Mammary epithelial cell (primary cell): ENCODE measurements at regions of chr11 and their contacts with region 1.

Region 1: GRCh38 chr11:61627567-61628445 is 46.9 kb upstream of the SYT7 start:
- DNase-seq: peak; percentile 59
- H3K4me3 ChIP-seq: no peak overlapping the region
- H3K27ac ChIP-seq: no peak overlapping the region
- H3K4me1 ChIP-seq: peaks cover 19% of the 10 kb centered on the region
- H3K27me3 ChIP-seq: no peaks in the 10 kb centered on the region
- CTCF ChIP-seq: peak; percentile 89 to 96

Region 2: GRCh38 chr11:61332797-61333549 is 294.8 kb before region 1 on chr11 and contains the starts of genes DDB1 and TKFC:
- CTCF ChIA-PET with region 1: no interaction called
- dilution Hi-C with region 1: no loop called
- in situ Hi-C with region 1: no loop called
- intact Hi-C with region 1: no loop called
- DNase-seq: peak; percentile 92
- H3K4me3 ChIP-seq: peak within 1 kb of the TSS; percentile 69 to 93 (median 91)
- H3K27ac ChIP-seq: peak within 1 kb of the TSS; percentile 84
- H3K4me1 ChIP-seq: peaks cover 39% of the 10 kb centered on the region
- H3K27me3 ChIP-seq: no peaks in the 10 kb centered on the region
- CTCF ChIP-seq: no peak
- total RNA-seq, gene DDB1: 214 to 230 TPM
- total RNA-seq, gene TKFC: 30.0 to 65.3 TPM

Region 3: GRCh38 chr11:61477727-61478148 is 150.1 kb before region 1 on chr11:
- CTCF ChIA-PET with region 1: no interaction called
- dilution Hi-C with region 1: no loop called
- in situ Hi-C with region 1: loop called in 1 of 2 experiments (anchors 10 kb)
- intact Hi-C with region 1: loop called (anchors 1 kb)
- DNase-seq: no peak
- H3K4me3 ChIP-seq: no peak overlapping the region
- H3K27ac ChIP-seq: no peak overlapping the region
- H3K4me1 ChIP-seq: peaks cover 8% of the 10 kb centered on the region
- H3K27me3 ChIP-seq: no peaks in the 10 kb centered on the region
- CTCF ChIP-seq: peak; percentile 73 to 95

Region 4: DNA sequence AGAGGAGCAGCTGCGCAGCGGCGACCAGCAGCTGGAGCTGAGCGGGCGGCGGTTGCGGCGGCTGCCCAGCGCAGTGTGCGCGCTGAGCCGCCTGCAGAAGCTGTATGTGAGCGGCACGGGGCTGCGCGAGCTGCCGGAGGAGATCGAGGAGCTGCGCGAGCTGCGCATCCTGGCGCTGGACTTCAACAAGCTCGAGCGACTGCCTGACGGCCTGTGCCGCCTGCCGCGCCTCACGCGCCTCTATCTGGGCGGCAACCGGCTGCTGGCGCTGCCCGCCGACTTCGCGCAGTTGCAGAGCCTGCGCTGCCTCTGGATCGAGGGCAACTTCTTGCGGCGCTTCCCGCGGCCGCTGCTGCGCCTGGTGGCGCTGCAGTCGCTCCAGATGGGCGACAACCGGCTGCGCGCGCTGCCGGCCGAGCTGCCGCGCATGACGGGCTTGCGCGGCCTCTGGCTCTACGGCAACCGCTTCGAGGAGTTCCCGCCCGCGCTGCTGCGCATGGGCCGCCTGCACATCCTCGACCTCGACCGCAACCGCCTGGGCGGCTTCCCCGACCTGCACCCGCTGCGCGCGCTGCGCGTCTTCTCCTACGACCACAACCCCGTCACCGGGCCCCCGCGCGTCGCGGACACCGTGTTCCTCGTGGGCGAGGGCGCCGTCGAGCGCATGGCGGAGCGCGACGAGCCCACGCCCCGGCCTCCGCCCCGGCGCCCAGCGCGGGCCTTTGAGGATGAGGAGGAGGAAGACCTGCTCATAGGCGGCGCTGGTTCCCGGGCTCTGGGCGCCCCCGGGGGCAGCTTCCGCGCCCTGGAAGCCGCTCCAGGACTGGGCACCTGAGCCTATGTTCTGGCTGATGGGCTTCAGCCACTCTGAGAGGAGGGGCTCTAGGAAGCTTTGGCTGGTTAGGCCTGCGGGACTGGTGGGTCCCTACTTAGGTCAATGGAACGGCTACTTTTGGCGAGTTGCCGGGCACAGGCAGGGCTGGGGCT is 118.5 kb before region 1 on chr11:
- CTCF ChIA-PET with region 1: no interaction called
- dilution Hi-C with region 1: no loop called
- in situ Hi-C with region 1: no loop called
- intact Hi-C with region 1: no loop called
- DNase-seq: peak; percentile 84
- H3K4me3 ChIP-seq: peak overlapping the region in 2 of 3 experiments; percentile 19 to 35
- H3K27ac ChIP-seq: no peak overlapping the region
- H3K4me1 ChIP-seq: peaks cover 11% of the 10 kb centered on the region
- H3K27me3 ChIP-seq: peaks cover 11% of the 10 kb centered on the region
- CTCF ChIP-seq: peak; percentile 24 to 52

Region 5: GRCh38 chr11:61567286-61568061 is 60.3 kb before region 1 on chr11:
- CTCF ChIA-PET with region 1: no interaction called
- dilution Hi-C with region 1: no loop called
- in situ Hi-C with region 1: no loop called
- intact Hi-C with region 1: loop called (anchors 1 kb)
- DNase-seq: peak; percentile 70
- H3K4me3 ChIP-seq: peak overlapping the region in 1 of 3 experiments; percentile 16
- H3K27ac ChIP-seq: no peak overlapping the region
- H3K4me1 ChIP-seq: no peaks in the 10 kb centered on the region
- H3K27me3 ChIP-seq: no peaks in the 10 kb centered on the region
- CTCF ChIP-seq: peak; percentile 42 to 62

Region 6: GRCh38 chr11:61602775-61603569 is 24.8 kb before region 1 on chr11:
- CTCF ChIA-PET with region 1: no interaction called
- dilution Hi-C with region 1: no loop called
- in situ Hi-C with region 1: no loop called
- intact Hi-C with region 1: loop called (anchors 2 kb)
- DNase-seq: peak; percentile 98
- H3K4me3 ChIP-seq: no peak overlapping the region
- H3K27ac ChIP-seq: peak overlapping the region; percentile 79
- H3K4me1 ChIP-seq: peaks cover 37% of the 10 kb centered on the region
- H3K27me3 ChIP-seq: no peaks in the 10 kb centered on the region
- CTCF ChIP-seq: no peak

Region 7: DNA sequence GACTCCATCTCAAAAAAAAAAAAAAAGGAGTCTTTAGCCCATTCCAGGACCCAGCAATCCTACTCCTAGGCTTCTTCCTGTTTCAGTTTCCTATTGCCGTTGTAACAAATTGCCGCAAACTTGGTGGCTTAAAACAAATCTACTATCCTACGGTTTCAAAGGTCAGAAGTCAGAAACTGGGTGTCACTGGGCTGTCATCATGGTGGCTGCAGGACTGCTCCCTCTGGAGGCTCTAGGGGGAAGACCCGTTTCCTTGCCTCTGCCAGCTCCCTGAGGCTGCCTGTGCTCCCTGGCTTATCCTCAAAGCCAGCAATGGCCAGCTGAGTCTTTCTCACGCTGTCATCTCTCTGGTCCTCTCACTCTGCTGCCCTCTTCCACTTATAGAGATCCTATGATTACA is 43.7 kb after region 1 on chr11:
- CTCF ChIA-PET with region 1: no interaction called
- dilution Hi-C with region 1: no loop called
- in situ Hi-C with region 1: no loop called
- intact Hi-C with region 1: no loop called
- DNase-seq: no peak
- H3K4me3 ChIP-seq: no peak overlapping the region
- H3K27ac ChIP-seq: no peak overlapping the region
- H3K4me1 ChIP-seq: no peaks in the 10 kb centered on the region
- H3K27me3 ChIP-seq: peaks cover 7% of the 10 kb centered on the region
- CTCF ChIP-seq: peak; percentile 15 to 43

Region 8: DNA sequence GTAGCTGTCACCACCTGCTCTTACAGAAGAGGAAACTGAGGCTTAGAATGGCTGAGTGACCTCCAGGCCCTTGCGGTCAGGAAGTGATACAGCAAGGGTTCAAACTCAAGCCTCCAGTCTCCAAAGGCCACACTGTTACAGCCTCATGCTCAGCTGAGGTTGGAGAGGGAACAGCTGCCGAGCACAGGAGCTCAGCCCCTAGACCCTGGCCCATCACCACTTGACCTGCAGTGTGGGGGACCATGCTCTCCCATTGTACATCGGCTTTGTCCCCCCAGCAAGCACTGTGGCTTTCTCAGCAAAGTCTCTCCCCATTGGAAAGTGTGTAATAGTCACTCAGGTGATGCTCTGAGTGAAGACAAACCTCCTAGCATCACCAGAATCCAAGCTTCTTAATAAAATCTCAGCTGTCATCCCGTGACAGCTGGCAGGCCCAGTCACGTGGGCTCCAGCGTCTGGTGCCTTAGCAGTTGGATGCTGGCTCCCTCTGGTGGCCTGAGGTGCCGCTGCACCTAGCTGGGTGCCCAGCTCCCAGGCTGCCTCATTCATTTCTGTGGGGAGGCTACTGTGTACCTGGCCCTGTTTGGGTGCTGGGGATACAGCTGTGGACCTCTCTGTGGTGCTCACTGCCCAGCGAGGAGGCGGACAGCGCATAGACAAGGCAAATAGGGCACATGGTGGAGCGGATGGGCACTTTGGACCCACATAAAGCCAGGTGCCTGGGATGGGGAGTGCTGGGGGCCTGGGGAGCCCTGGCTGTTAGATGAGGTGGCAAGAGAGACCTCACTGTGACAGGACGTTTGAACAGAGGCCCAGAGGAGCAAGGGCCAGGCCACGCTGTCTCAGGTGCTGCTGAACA is 105.5 kb after region 1 on chr11:
- CTCF ChIA-PET with region 1: interaction called, 5 read pairs
- dilution Hi-C with region 1: loop called (anchors 5 kb)
- in situ Hi-C with region 1: no loop called
- intact Hi-C with region 1: no loop called
- DNase-seq: peak; percentile 70
- H3K4me3 ChIP-seq: no peak overlapping the region
- H3K27ac ChIP-seq: no peak overlapping the region
- H3K4me1 ChIP-seq: peaks cover 27% of the 10 kb centered on the region
- H3K27me3 ChIP-seq: no peaks in the 10 kb centered on the region
- CTCF ChIP-seq: peak; percentile 99 to 100

Region 9: DNA sequence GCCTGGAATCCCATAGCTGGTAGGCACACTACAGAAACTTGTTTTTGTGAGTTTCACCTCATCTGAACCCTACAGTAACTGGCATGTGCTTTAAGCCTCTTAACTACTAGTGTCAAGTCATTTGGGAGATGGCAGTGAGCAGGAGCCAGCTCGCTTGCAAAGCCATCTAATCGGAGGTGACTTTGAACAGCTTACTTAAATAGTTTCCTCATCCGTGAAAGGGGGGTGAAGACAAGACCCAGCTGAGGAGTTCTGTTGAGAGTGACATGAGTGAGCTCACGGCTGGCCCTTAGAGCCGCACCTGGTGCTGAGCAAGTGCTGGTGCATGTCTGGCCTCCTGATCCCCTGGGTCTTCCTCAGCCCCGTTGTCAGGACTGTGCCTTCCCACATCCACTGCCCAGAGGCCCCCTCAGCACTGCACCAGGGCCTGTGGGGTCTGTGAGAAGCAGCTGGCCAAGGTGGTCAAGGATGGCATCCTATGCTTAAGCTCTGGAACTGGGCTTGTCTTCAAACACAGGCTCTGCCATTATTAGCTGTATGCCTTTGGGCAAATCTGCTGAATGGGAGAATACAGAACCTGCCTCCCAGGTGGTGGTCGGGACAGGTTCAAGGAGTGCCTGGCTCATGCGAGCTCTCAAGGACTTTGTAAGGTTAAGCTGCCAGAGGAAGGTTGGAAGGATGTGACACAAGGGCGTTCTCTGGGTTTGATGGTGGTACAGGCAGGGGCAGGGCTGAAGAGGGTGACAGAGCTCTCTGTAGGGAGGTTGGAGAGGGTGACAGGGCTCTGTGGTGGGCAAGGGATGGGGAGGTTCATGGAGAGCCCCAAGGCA is 523.3 kb after region 1 on chr11:
- CTCF ChIA-PET with region 1: no interaction called
- dilution Hi-C with region 1: no loop called
- in situ Hi-C with region 1: no loop called
- intact Hi-C with region 1: no loop called
- DNase-seq: no peak
- H3K4me3 ChIP-seq: no peak overlapping the region
- H3K27ac ChIP-seq: no peak overlapping the region
- H3K4me1 ChIP-seq: no peaks in the 10 kb centered on the region
- H3K27me3 ChIP-seq: no peaks in the 10 kb centered on the region
- CTCF ChIP-seq: no peak